HEK293 (cell line): ENCODE measurements at regions of chr15 and their contacts with region 1.

Region 1: GRCh38 chr15:90954712-90955671 is at the start of gene RCCD1:
- H3K4me3 ChIP-seq: peak within 1 kb of the TSS; percentile 73
- H3K27ac ChIP-seq: peak within 1 kb of the TSS; percentile 88
- H3K4me1 ChIP-seq: no peaks in the 10 kb centered on the region; the same call in 1 of the 2 replicates
- CTCF ChIP-seq: no peak

Region 2: DNA sequence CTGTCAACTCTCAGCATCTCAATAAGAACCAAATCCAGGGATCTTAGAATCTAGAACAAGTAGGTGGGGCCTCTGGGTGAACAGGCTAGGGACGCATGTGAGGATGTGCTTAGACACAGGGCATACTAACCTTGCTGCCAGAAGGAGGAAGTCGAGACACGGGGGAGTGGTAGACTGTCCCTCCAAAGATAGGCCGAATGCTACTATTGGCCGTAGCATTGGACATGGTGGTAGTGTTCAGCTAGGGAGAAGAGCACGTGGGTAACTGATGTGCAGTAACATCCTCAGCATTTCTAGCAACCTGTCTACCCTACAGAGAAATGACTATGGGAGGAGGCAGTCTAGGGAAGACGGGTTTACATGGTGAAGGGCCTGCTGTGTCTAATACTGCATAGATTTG is 15.3 kb after region 1 on chr15:
- CTCF ChIA-PET with region 1: interaction called, 54 read pairs
- POLR2A ChIA-PET with region 1: interaction called, 13 read pairs
- H3K4me3 ChIP-seq: no peak overlapping the region
- H3K27ac ChIP-seq: no peak overlapping the region
- H3K4me1 ChIP-seq: no peaks in the 10 kb centered on the region
- CTCF ChIP-seq: no peak

Region 3: DNA sequence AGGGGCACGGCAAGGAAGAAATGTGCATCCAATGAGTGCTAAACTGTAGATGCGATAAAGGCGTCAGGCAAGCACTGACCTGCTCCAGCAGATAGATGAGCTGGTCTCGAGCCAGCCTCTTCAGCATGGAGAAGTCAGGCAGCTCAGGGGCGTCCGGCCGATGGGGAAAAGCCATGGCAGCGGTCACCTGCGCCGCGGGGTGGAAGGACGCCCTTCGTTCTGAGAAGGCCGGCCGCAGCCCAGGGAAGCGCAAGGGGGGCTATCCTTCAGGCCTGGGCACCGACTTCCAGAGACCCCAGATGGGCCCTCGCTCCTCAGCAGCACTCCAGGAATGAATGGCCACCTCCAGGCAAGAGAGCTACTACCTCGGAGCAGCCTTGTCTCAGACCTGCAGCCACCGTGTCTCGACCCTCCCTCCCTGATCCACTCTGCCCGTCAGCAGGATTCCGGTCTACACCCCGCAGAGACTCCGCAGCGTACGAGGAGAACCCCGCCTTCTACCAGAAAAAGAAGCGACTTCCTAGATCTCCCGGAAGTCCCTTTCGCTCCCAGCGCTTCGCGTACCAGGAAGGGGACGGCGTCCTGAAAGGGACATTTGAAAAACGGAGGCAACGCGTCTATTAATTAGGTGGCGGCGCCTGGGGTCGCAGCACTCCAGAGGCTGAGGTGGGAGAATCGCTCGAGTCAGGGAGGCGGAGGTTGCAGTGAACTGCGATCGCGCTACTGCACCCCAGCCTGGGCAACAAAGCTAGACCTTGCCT is 67.3 kb after region 1 on chr15 and contains the start of gene VPS33B:
- CTCF ChIA-PET with region 1: interaction called, 15 read pairs
- POLR2A ChIA-PET with region 1: interaction called, 15 read pairs
- H3K4me3 ChIP-seq: peak within 1 kb of the TSS; percentile 74
- H3K27ac ChIP-seq: peak within 1 kb of the TSS; percentile 61
- H3K4me1 ChIP-seq: peaks cover 6% of the 10 kb centered on the region; the same call in 1 of the 2 replicates
- CTCF ChIP-seq: peak; percentile 47; the same call in 1 of the 2 replicates

Region 4: DNA sequence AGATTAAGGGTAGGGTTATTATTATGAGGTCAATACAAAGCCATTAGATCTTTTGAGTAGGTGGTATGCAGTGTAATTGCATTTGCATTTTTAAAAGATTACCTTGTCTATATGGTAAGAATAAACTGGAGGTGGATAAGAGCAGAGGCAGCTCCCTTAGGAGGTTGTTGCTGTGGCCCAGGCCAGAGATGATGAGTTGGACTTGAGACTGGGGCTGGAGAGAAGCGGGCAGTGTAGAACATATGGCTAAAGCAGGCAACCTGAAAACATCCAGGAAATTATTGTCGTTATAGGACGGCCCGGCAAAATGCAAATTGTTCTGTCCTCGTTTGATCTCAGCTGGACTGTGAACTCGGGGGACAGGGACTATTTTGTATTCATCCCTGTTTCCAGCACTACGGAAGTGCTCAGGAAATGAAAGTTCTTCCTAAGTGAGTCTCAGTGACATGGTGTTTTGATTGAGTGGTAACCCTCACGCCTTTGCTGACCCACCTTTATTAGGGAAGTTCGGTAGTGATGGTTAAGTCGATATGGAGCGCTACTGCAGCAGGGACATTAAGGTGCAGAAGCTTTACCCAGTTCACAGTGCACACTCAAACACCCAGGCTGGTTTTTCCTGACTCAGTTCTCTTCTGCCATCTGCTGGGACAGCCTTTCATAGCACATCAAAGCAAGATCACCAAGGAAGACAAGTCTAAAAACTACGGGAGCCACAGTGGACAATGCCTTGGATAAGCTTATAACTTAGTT is 94.6 kb after region 1 on chr15:
- CTCF ChIA-PET with region 1: interaction called, 43 read pairs
- POLR2A ChIA-PET with region 1: no interaction called
- H3K4me3 ChIP-seq: no peak overlapping the region
- H3K27ac ChIP-seq: no peak overlapping the region
- H3K4me1 ChIP-seq: no peaks in the 10 kb centered on the region
- CTCF ChIP-seq: peak; percentile 69